ENCODE measurements at regions of chr10 and their contacts with region 1.

Region 1: DNA sequence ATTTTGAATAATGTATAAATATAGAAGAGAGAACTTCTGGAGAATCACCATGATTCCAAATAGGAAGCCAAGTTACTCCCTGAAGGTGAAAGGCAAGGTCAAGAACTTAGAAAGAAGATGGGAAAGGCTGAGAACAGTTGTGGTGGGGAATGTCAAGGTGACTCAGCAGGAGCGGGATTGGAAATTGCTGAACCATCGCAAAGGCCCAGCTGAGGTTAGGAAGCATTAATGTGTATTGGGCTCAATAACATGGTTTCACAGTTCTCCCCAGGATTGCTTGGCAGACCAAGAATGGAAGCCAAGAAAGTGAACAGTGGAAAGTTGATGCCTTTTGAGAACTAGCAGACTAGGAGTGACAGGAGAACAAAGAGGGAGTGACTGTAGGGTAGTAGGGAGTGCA is 133.3 kb downstream of the VTI1A start:
- DNase-seq: no peak
- ATAC-seq: no peak
- H3K4me3 ChIP-seq: no peak overlapping the region
- H3K27ac ChIP-seq: no peak overlapping the region
- H3K4me1 ChIP-seq: no peaks in the 10 kb centered on the region
- H3K27me3 ChIP-seq: no peaks in the 10 kb centered on the region
- CTCF ChIP-seq: no peak

Region 2: DNA sequence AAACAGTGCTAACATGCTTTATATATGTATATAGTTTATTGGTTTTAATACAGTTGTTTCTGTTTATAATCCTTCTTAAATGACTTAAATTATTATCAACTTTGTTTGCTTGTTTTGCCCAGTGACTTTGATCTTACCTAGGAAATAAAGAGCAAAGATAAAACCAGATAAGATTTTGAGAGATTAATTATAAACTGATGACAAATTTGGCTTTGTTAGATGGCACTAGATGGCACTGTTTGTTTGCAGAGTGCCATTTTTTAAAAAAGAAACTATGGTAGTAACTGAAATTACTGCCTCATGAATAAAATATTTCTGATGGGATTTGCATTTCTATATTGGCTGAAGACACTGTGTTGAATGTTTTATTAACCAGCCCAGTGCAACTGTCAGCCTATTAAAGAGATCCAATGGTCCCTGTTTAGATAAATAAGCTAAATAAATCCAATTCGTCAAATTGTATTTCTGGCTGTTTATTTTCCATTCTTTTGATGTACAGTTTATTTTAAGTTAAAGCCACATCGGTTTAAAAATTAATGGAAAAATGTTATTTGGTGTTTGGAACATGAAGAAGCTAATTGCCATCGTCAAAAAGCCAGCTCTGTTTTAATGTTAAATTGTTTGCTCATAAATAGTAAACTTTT is 104.6 kb before region 1 on chr10:
- CTCF ChIA-PET with region 1: no interaction called
- POLR2A ChIA-PET with region 1: no interaction called
- in situ Hi-C with region 1: no loop called
- intact Hi-C with region 1: no loop called
- DNase-seq: no peak
- ATAC-seq: no peak
- H3K4me3 ChIP-seq: no peak overlapping the region
- H3K27ac ChIP-seq: no peak overlapping the region
- H3K4me1 ChIP-seq: 0 out of 2 replicates have a peak, but pooled peaks cover 5% of the 10 kb centered on the region
- H3K27me3 ChIP-seq: no peaks in the 10 kb centered on the region
- CTCF ChIP-seq: peak; percentile 68; the same call in 1 of the 2 replicates

Region 3: GRCh38 chr10:112613620-112614019 is 33.4 kb after region 1 on chr10:
- CTCF ChIA-PET with region 1: no interaction called
- POLR2A ChIA-PET with region 1: no interaction called
- in situ Hi-C with region 1: no loop called
- intact Hi-C with region 1: no loop called
- DNase-seq: no peak
- ATAC-seq: no peak
- H3K4me3 ChIP-seq: no peak overlapping the region
- H3K27ac ChIP-seq: no peak overlapping the region
- H3K4me1 ChIP-seq: no peaks in the 10 kb centered on the region
- H3K27me3 ChIP-seq: no peaks in the 10 kb centered on the region
- CTCF ChIP-seq: no peak

Region 4: DNA sequence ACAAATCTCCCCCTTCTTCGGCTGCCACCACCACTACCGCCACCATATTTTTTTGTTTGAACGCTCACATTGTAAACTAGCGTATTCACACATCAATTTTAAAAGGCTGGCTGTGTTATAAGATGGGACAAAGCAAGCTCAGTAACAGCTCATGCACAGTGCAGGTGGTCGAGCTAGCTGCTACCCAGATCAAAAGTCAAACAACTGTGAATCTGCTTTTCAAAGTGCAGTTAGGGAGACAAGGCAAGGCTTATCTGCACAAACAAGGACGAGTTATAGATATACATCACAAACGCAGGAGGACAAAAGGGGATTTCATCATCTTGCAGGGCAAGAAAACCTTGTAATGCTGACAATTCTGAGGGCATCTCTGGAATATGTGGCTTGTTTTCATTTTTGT is 98.3 kb after region 1 on chr10:
- CTCF ChIA-PET with region 1: no interaction called
- POLR2A ChIA-PET with region 1: interaction called, 10 read pairs
- in situ Hi-C with region 1: no loop called
- intact Hi-C with region 1: no loop called
- DNase-seq: no peak
- ATAC-seq: no peak
- H3K4me3 ChIP-seq: no peak overlapping the region
- H3K27ac ChIP-seq: no peak overlapping the region
- H3K4me1 ChIP-seq: no peaks in the 10 kb centered on the region
- H3K27me3 ChIP-seq: no peaks in the 10 kb centered on the region
- CTCF ChIP-seq: no peak